ENCODE measurements at regions of chr9 and their contacts with region 1.

Region 1: GRCh38 chr9:92716557-92716956 is 46.6 kb upstream of the IPPK start:
- DNase-seq: no peak
- H3K4me3 ChIP-seq: no peak overlapping the region
- H3K27ac ChIP-seq: peak overlapping the region in 1 of 4 donors; percentile 3
- H3K4me1 ChIP-seq: no peaks in the 10 kb centered on the region
- H3K27me3 ChIP-seq: no peaks in the 10 kb centered on the region
- CTCF ChIP-seq: peak; percentile 89 to 92 (median 92)
- EP300 ChIP-seq: no peak
- POLR2A ChIP-seq: no peak

Region 2: GRCh38 chr9:92686954-92687353 is 29.6 kb before region 1 on chr9:
- intact Hi-C with region 1: no loop called
- DNase-seq: no peak
- H3K4me3 ChIP-seq: no peak overlapping the region
- H3K27ac ChIP-seq: no peak overlapping the region
- H3K4me1 ChIP-seq: no peaks in the 10 kb centered on the region
- H3K27me3 ChIP-seq: no peaks in the 10 kb centered on the region
- CTCF ChIP-seq: no peak
- EP300 ChIP-seq: no peak
- POLR2A ChIP-seq: no peak

Region 3: GRCh38 chr9:92790542-92791527 is 74.3 kb after region 1 on chr9:
- intact Hi-C with region 1: loop called (anchors 1 kb)
- DNase-seq: peak; percentile 81
- H3K4me3 ChIP-seq: no peak overlapping the region
- H3K27ac ChIP-seq: no peak overlapping the region
- H3K4me1 ChIP-seq: peaks cover 0 to 5% (median 0%) of the 10 kb centered on the region in 4 donors
- H3K27me3 ChIP-seq: peaks cover 0 to 7% (median 0%) of the 10 kb centered on the region in 3 donors
- CTCF ChIP-seq: peak; percentile 76 to 88 (median 86)
- EP300 ChIP-seq: no peak
- POLR2A ChIP-seq: no peak